Posterior vena cava (tissue), 2 donors: ENCODE measurements at regions of chr4 and their contacts with region 1.

Region 1: GRCh38 chr4:24405926-24406325 is 178.4 kb downstream of the DHX15 start:
- DNase-seq: no peak

Region 2: GRCh38 chr4:24440765-24441164 is 34.8 kb after region 1 on chr4:
- intact Hi-C with region 1: loop called in 1 of 2 experiments (anchors 1 kb)
- DNase-seq: no peak